Activated CD4-positive, alpha-beta T cell treated with anti-CD3 and anti-CD28 coated beads, Interleukin-2, amount 10 ng/mL, durations not matched to agents 24 days and 14 days (primary cell): ENCODE measurements at regions of chr4 and their contacts with region 1.

Region 1: DNA sequence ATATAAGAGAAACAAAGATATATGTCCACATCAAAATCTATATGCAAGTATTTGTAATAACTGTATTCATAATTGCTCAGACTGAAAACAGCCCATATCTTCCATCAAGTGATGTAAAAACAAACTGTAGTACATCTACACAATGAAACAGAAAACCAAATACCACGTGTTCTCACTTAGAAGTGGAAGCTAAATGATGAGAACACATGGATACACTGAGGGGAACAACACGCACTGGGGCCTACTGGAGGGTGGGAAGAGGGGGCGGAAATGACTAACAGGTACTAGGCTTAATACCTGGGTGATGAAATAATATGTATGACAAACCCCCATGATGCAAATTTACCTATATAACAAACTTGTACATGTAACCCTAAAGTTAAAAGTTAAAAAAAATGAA is 42.7 kb downstream of the UBA6 start:
- DNase-seq: no peak
- H3K4me3 Mint-ChIP-seq: no peak overlapping the region
- H3K27ac Mint-ChIP-seq: peak overlapping the region; percentile 61
- H3K4me1 Mint-ChIP-seq: peaks cover 10% of the 10 kb centered on the region
- H3K27me3 Mint-ChIP-seq: no peaks in the 10 kb centered on the region

Region 2: DNA sequence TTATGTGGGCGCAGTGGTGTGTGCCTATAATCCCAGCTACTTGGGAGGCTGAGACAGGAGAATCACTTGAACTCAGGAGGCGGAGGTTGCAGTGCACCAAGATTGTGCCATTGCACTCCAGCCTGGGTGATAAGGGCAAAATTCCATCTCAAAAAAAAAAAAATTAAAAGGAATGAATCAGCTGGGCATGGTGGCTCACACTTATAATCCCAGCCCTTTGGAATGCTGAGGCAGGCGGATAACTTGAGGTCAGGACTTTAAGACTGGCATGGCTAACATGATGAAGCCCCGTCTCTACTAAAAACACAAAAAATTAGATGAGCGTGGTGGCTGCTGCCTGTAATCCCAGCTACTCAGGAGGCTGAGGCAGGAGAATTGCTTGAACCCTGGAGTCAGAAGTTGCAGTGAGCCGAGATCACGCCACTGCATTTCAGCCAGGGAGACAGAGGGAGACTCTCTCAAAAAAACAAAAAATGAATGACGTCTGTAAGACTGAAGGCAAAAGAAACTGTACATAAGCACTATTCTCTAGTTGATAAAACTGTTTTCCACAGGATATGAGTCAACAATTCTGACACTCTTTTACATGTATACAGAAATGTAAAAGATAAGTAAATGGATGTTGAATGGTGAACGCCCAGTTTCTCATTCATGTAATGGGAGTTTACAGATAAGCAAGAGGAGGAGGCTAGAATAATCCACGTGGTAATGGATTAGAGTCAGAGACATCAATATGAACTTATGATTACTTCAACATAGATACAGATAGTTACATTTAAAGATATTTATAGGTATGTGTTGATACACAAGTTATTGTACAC is 135.2 kb before region 1 on chr4:
- intact Hi-C with region 1: loop called (anchors 1 kb)
- DNase-seq: peak; percentile 69
- H3K4me3 Mint-ChIP-seq: peak overlapping the region; percentile 66
- H3K27ac Mint-ChIP-seq: peak overlapping the region; percentile 97
- H3K4me1 Mint-ChIP-seq: peaks cover 55% of the 10 kb centered on the region
- H3K27me3 Mint-ChIP-seq: no peaks in the 10 kb centered on the region